ENCODE measurements at regions of chr13 and their contacts with region 1.

Region 1: GRCh38 chr13:39616087-39616694 is 13.2 kb upstream of the LHFPL6 start:
- DNase-seq: no peak
- ATAC-seq: peak; percentile 87

Region 2: GRCh38 chr13:39051157-39051556 is 565.0 kb before region 1 on chr13:
- intact Hi-C with region 1: loop called (anchors 5 kb)
- DNase-seq: no peak
- ATAC-seq: no peak

Region 3: GRCh38 chr13:39144941-39145533 is 471.2 kb before region 1 on chr13:
- intact Hi-C with region 1: loop called (anchors 5 kb)
- DNase-seq: peak; percentile 42
- ATAC-seq: peak; percentile 82

Region 4: DNA sequence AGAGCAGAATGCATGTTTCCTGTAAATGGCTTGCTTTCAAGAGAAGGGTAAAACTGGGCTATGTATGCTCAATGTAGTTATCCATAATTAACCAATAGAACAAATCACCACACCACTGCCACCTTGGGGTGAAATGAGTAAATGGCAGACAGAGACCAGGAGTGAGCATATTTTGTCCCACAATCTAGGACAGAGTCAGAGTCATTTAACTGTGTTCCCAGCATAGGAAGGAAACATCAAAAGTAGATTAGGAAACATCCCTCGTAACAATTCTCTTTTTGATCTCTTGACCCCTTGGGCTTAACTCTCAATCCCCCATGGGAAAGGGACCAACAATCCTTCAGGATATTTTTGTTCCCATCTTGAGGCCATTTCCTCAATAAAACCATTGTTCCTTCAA is 353.2 kb before region 1 on chr13:
- intact Hi-C with region 1: loop called (anchors 5 kb)
- DNase-seq: no peak
- ATAC-seq: peak; percentile 78

Region 5: DNA sequence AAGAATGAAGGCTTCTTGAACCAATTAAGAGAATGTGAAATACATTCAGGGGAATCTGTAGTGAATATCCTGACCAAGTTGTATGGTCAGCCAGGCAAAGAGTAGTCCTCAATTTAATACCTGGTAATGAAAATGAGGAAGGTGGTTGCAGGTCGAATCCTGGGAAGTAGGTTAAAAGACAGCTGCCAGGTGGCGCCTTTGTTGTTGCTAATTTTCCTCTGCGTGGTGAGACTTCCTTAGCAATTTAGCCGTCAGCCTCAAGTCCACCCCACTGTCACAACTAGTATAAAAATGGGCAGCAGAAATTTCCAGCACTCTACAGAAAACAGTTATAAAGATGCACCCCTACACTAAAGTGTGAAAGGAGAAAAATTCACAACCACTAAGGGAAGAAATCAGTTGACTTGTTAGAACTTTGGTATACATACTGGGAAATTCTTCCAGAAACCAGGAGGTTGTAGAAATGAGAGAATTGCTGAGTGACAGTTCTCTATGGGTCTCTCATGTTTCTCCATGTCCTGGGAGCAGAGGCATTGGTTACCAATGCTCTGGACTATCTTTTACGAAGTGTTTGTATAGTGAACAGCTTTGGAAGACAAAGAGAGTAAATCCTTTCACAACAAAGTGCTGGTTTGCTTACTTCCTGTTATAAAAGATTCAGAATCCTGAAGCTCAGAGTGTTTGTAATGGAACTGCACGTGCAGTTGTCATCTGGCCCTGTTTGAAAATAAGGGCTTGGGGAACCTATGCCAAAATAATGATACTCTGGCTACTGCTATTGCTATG is 342.0 kb before region 1 on chr13:
- intact Hi-C with region 1: loop called (anchors 5 kb)
- DNase-seq: peak; percentile 41
- ATAC-seq: peak; percentile 34

Region 6: GRCh38 chr13:40230833-40231266 is 614.7 kb after region 1 on chr13:
- intact Hi-C with region 1: no loop called
- DNase-seq: no peak
- ATAC-seq: no peak

Region 7: DNA sequence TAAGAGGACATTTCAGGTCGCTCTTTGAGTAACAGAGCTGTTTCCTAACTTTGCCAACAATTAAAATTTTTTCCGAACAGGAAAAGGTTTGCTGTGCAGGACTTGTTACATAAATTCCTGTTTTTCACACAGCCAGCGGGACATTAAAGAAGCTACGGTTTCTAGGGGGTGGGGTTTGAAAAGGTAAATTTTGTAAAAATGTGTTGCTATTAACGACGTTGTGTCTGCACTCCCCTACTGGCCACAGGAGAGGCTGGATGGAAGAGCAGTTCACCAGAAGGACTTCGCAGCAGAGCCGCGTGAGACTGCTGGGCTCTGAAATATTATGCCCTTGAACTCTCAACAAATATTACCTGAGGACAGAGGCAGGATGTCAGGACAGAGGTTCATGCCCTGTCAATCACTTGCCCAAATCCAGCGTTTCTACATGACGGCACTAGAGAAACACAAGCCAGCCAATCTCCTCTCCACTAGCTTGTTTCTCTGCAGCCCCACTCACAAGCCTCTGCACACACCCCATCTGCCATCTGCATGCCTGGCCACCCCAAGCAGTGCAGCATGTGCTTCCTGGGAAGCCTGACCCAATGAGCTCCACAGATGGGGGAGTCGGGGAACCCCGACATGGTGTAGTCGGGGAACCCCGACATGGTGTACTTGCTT is 948.3 kb after region 1 on chr13:
- intact Hi-C with region 1: no loop called
- DNase-seq: no peak
- ATAC-seq: peak; percentile 14